ENCODE measurements at regions of chr11 and their contacts with region 1.

Region 1: DNA sequence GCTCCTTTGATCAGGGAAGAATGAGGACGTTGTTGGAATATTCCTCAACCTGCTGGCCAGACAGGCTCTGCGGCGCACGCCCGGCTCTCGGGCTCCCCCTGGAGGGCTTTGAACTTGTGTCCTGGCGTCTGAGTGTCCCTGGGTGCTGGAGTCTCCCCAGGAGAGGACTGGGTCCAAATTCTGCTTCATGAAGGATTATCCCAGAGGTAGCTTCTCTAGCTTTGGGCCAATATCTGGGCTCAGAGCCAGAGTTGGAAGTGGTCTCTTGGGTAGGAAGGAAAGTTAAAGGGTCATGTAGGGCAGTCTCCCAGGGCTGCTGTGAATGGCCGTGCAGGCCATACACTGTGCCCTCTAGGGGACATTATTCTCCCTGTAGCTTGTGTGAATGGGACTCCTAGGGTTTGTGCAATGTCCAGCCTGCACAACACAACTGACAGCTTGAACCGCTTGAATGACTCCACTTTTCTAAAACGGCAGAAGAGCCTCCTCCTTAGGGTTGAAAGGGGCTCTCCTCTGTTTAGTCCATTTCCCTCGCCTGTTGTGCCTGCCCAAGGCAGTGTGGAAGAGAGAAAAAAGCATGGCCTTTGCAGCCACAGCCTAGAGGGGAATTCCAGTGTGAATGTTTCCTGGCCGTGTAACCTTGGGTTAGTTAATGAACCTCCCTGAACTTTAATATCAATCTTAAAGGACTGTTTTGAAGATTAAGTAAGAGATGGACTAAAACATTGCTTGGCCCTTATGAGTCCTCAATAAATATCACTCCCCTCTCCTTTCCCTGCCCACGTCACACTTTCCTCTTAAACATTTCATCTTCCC is 111.2 kb upstream of the THY1 start:
- DNase-seq: peak; percentile 19
- H3K4me3 Mint-ChIP-seq: no peak overlapping the region
- H3K27ac Mint-ChIP-seq: no peak overlapping the region
- H3K4me1 Mint-ChIP-seq: no peaks in the 10 kb centered on the region
- H3K27me3 Mint-ChIP-seq: peaks cover 9% of the 10 kb centered on the region

Region 2: DNA sequence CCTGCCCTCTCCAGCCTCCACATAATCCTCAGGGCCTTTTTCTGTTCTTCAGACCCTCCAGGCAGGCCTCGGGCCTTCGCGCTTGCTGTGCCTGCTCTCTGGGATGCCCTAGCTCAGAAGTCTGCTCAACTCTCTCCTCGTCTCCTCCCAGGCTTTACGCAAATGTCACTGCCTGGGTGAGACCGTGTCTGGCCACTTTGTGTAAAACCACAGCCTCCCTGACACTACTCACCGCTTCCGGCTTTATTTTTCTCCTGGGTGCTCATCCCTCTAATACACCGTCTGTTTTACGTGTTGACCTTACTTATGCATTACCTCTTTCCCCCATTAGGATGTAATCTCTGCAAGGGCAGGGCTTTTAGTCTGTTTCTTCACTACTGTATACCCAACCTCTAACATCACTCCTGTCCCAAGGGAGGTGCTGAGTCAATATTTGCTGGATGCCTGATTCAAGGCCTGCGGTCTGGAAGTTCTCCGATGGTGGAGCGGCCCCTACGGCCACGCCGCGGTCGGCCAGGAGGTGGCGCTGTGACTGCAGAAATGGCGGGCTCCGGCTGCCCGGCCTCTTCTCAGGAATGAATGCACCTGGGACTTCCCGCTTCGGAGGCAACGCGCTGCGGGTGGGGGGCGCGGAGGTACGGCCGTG is 53.0 kb before region 1 on chr11:
- intact Hi-C with region 1: loop called (anchors 1 kb)
- DNase-seq: peak; percentile 55
- H3K4me3 Mint-ChIP-seq: no peak overlapping the region
- H3K27ac Mint-ChIP-seq: no peak overlapping the region
- H3K4me1 Mint-ChIP-seq: no peaks in the 10 kb centered on the region
- H3K27me3 Mint-ChIP-seq: peaks cover 6% of the 10 kb centered on the region

Region 3: DNA sequence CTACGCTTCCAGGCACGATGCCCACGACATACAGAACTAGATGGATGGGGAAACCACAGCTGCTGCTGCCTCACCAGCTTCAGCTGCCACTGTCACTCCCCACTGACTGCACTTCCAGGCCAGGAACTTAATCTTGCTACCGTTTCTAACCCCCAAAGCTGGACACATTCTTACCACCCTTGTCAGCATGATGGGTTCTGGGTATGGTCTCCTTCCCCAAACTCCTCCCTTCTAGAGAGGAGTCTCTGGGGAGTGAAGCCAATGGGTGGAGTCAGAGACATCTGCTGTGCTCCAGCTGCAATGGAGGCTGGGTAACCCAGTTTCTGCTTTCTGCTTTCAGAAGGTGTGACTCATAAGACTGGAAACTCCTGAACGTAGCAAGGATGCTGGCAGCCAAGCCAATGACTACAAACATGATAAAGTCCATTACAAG is 24.1 kb before region 1 on chr11:
- intact Hi-C with region 1: loop called (anchors 1 kb)
- DNase-seq: peak; percentile 5
- H3K4me3 Mint-ChIP-seq: no peak overlapping the region
- H3K27ac Mint-ChIP-seq: peak overlapping the region; percentile 81
- H3K4me1 Mint-ChIP-seq: peaks cover 19% of the 10 kb centered on the region
- H3K27me3 Mint-ChIP-seq: peaks cover 4% of the 10 kb centered on the region

Region 4: DNA sequence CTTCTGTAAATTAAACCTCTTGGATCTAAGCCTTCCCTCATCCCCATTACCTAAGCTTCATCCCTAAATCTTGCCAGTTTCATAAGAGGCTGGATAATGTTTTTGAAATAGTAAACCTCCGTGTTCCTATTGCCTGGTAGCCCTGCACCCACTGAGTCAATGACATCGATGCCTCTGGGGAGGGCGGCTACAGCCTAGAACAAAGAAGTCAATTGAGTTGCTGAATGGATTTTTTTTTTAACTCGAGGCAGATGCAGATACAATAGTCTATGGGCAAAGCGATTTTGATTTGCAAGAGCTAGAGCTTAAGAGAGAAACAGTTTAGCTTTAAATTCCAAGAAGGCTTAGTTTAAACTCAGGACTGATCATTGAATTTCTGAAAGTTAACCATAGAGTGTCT is 73.6 kb after region 1 on chr11:
- intact Hi-C with region 1: no loop called
- DNase-seq: no peak
- H3K4me3 Mint-ChIP-seq: no peak overlapping the region
- H3K27ac Mint-ChIP-seq: no peak overlapping the region
- H3K4me1 Mint-ChIP-seq: no peaks in the 10 kb centered on the region
- H3K27me3 Mint-ChIP-seq: peaks cover 13% of the 10 kb centered on the region